ENCODE measurements at regions of chr2 and their contacts with region 1.

Region 1: GRCh38 chr2:176643646-176644045 is 374.4 kb downstream of the MTX2 start:
- DNase-seq: peak; percentile 79 to 92 (median 82)
- H3K4me3 ChIP-seq: no peak overlapping the region
- H3K27ac ChIP-seq: peak overlapping the region in 2 of 5 donors; percentile 7 to 56
- H3K4me1 ChIP-seq: peaks cover 0 to 6% of the 10 kb centered on the region in 2 donors
- H3K27me3 ChIP-seq: no peaks in the 10 kb centered on the region
- CTCF ChIP-seq: peak in 1 of 6 experiments; percentile 18
- POLR2A ChIP-seq: no peak

Region 2: DNA sequence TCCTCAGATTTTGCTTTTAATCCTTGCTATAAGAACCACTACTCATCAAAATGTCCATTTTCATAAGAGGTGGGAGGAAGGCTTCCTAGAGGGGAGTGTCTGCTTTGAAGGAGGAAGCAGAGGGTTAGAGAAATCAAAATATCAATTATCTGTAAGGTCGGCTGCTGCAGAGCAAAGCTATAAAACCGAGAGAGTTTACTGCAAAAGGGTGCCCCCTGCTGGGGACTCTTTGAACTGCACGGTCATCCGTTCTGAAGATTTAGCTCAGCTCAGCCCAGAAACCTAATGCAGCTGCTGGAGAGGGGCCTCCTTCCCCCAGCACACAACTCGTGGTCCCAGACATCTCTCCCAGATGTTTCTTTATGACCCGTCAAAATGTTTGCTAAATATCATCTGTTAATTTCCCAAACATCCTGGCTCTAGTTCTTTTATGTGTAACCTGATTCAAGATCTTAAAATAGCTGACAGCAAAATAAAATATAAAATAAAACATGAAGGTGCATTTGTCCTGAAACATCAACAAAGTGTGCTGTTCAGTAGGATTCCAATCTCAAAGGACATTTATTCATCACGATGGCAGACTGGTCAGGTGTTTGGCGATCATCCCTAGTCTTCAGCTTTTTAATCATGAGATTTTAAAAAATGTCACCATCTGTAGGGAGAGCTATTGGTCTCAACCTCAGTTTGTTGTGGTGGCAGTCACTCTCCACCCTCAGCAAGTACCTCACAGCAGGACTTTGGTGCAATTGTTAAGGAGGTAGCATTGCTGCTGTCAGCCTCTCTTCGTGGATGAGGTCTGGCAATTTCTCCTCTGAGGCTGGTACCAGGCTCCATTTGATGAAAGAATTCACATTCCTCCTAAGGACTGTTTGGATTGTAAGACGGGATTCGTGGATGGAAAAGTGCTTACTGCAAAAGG is 188.5 kb before region 1 on chr2:
- intact Hi-C with region 1: loop called in 1 of 2 experiments (anchors 10 kb)
- DNase-seq: peak; percentile 63 to 97 (median 87)
- H3K4me3 ChIP-seq: no peak overlapping the region
- H3K27ac ChIP-seq: peak overlapping the region in 1 of 5 donors; percentile 45
- H3K4me1 ChIP-seq: no peaks in the 10 kb centered on the region
- H3K27me3 ChIP-seq: no peaks in the 10 kb centered on the region
- CTCF ChIP-seq: peak; percentile 80 to 98 (median 88)
- POLR2A ChIP-seq: no peak

Region 3: DNA sequence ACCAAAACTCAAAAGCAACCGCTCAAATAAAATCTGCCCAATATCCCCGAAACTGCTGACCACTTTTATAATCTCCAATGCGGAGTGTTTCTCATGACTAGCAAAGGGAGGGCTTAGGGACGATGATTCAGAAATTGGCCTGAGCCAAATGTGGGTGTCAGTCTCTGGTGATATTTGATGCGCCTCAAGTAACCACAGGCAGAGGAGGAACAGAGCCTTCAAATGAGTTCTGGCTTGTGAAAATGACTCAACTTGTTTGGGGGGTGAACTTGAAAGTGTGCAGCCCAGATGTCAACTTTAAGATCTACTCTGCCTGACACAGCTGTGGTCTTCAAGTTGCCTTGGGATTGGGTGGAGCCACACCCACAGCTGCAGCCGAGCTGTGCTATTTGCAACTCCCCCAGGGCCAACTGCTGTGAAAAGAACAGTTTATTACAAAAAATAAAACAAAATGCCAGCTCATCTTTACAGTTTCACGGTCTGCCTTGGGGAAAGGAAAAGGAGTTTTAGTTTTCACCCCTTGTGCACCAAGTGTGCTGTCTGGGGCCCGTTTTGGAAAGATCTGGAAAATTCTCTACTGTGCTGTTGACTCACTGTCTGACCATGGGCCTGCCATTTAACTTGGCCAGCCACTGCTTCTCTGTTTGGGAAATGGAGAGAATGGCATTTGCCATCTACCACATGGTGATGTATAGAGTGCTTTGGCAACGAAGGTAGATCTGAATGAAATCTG is 152.3 kb before region 1 on chr2:
- intact Hi-C with region 1: no loop called
- DNase-seq: no peak
- H3K4me3 ChIP-seq: no peak overlapping the region
- H3K27ac ChIP-seq: peak overlapping the region in 1 of 5 donors; percentile 60
- H3K4me1 ChIP-seq: peaks cover 0 to 11% of the 10 kb centered on the region in 2 donors
- H3K27me3 ChIP-seq: peaks cover 7% of the 10 kb centered on the region
- CTCF ChIP-seq: no peak
- POLR2A ChIP-seq: no peak

Region 4: GRCh38 chr2:176814306-176815052 is 170.8 kb after region 1 on chr2:
- intact Hi-C with region 1: loop called (anchors 5 to 10 kb)
- DNase-seq: no peak
- H3K4me3 ChIP-seq: no peak overlapping the region
- H3K27ac ChIP-seq: no peak overlapping the region
- H3K4me1 ChIP-seq: peaks cover 16 to 30% of the 10 kb centered on the region in 2 donors
- H3K27me3 ChIP-seq: no peaks in the 10 kb centered on the region
- CTCF ChIP-seq: peak; percentile 54 to 80 (median 70)
- POLR2A ChIP-seq: no peak

Region 5: GRCh38 chr2:176978921-176979320 is 335.3 kb after region 1 on chr2:
- intact Hi-C with region 1: no loop called
- DNase-seq: no peak
- H3K4me3 ChIP-seq: no peak overlapping the region
- H3K27ac ChIP-seq: no peak overlapping the region
- H3K4me1 ChIP-seq: no peaks in the 10 kb centered on the region
- H3K27me3 ChIP-seq: no peaks in the 10 kb centered on the region
- CTCF ChIP-seq: no peak
- POLR2A ChIP-seq: no peak